ENCODE measurements at regions of chr12 and their contacts with region 1.

Region 1: GRCh38 chr12:124906606-124907261 is 7.7 kb downstream of the UBC start:
- DNase-seq: peak; percentile 76 to 93 (median 86)
- ATAC-seq: peak; percentile 65 to 86 (median 78)
- H3K4me3 ChIP-seq: no peak overlapping the region
- H3K27ac ChIP-seq: peak overlapping the region in 2 of 4 donors; percentile 13 to 39
- H3K4me1 ChIP-seq: peaks cover 16 to 19% (median 18%) of the 10 kb centered on the region in 3 donors
- H3K27me3 ChIP-seq: no peaks in the 10 kb centered on the region
- CTCF ChIP-seq: peak; percentile 84 to 97 (median 95)

Region 2: GRCh38 chr12:124786061-124786964 is 120.4 kb before region 1 on chr12:
- intact Hi-C with region 1: loop called in 1 of 3 experiments (anchors 10 kb)
- DNase-seq: peak in 4 of 6 donors; percentile 52 to 61 (median 56)
- ATAC-seq: peak; percentile 78 to 98 (median 93)
- H3K4me3 ChIP-seq: peak overlapping the region in 1 of 4 donors; percentile 27
- H3K27ac ChIP-seq: no peak overlapping the region
- H3K4me1 ChIP-seq: no peaks in the 10 kb centered on the region
- H3K27me3 ChIP-seq: no peaks in the 10 kb centered on the region
- CTCF ChIP-seq: no peak

Region 3: DNA sequence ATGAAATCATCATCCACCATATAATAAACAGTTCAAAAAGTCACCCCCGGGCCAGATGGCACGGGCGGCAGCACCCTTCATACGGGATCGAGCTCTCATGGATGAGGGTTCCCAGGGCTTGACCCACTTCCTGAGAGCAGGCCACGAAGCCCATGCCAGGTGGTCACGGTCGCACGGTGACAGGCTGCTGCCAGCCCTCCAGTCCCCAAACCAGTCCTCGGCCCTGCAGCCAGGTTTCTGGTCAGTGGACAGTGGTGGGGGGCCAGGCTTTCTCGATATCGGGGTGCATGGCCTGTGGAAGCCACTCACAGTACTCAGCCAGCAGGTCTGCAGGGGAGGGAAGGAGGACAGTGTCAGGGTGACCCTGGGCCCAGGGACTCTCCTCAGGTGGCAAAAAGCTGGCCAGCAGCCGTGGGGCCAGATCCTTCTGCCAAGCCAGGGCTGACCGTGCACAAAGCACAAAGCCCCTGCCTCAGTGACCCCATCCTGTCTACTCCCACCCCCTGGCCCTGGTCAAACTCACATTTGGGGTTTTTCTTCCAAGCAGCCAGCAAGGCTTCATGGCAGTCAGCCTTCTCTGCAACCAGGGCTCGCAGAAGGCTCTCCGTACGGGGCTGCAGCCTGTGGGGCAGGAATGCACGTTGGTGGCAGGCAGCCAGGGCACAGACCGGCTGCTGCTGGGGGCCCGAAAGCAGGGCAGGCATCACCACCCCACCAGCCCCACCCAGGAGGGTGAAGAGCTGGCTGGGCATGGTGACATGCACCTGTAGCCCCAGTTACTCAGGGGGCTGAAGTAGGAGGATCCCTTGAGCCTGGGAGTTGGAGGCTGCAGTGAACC is 41.0 kb after region 1 on chr12:
- intact Hi-C with region 1: no loop called
- DNase-seq: no peak
- ATAC-seq: no peak
- H3K4me3 ChIP-seq: no peak overlapping the region
- H3K27ac ChIP-seq: no peak overlapping the region
- H3K4me1 ChIP-seq: no peaks in the 10 kb centered on the region
- H3K27me3 ChIP-seq: no peaks in the 10 kb centered on the region
- CTCF ChIP-seq: no peak

Measured in pancreas (tissue), 10 donors.